Activated T-helper 1 cell treated with anti-CD3 and anti-CD28 coated beads, Interleukin-12 subunit alpha, Interleukin-12 subunit beta, Interleukin-2, Interleukin-4 antibody, amounts not matched to agents 30 ng/mL and 10 ng/mL and 1 ng/mL, durations not matched to agents 14 hours and 24 hours and 36 hours (primary cell): ENCODE measurements at regions of chr10 and their contacts with region 1.

Region 1: DNA sequence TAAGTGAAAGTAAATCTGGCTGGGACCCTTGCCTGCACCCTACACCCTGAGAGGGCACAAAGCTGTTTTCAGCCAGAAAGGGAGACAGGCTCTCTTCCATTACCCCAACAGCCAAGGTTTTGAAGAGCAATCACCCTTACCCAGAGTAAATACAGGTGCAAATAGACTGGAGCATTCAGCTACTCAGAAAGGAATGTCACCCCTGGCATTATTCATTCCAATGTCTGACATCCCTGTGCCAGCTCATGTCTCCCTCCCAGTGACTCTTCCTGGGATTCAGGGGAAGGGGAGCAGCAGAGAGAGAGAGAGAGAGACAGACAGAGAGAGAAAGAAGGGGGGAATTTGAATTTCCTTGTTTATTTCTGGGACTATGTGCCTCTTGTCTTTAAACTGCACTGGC is 611.8 kb downstream of the SORCS3 start:
- DNase-seq: no peak
- H3K4me3 Mint-ChIP-seq: no peak overlapping the region
- H3K27ac Mint-ChIP-seq: no peak overlapping the region
- H3K4me1 Mint-ChIP-seq: no peaks in the 10 kb centered on the region
- H3K27me3 Mint-ChIP-seq: no peaks in the 10 kb centered on the region

Region 2: GRCh38 chr10:104580774-104581675 is 671.9 kb before region 1 on chr10:
- intact Hi-C with region 1: loop called (anchors 10 kb)
- DNase-seq: peak; percentile 38
- H3K4me3 Mint-ChIP-seq: no peak overlapping the region
- H3K27ac Mint-ChIP-seq: no peak overlapping the region
- H3K4me1 Mint-ChIP-seq: peaks cover 5% of the 10 kb centered on the region
- H3K27me3 Mint-ChIP-seq: peaks cover 1% of the 10 kb centered on the region